Stomach (tissue), 19 donors: ENCODE measurements at regions of chr17 and their contacts with region 1.

Region 1: GRCh38 chr17:44110823-44111633 is 12.4 kb downstream of the HDAC5 start:
- DNase-seq: peak; percentile 98
- H3K4me3 ChIP-seq: peak overlapping the region; percentile 32 to 40 (median 39)
- H3K27ac ChIP-seq: peak overlapping the region; percentile 75 to 93 (median 83)
- H3K4me1 ChIP-seq: peaks cover 55 to 100% (median 81%) of the 10 kb centered on the region in 4 donors
- H3K27me3 ChIP-seq: no peaks in the 10 kb centered on the region
- CTCF ChIP-seq: no peak
- EP300 ChIP-seq: peak; percentile 10
- POLR2A ChIP-seq: no peak

Region 2: DNA sequence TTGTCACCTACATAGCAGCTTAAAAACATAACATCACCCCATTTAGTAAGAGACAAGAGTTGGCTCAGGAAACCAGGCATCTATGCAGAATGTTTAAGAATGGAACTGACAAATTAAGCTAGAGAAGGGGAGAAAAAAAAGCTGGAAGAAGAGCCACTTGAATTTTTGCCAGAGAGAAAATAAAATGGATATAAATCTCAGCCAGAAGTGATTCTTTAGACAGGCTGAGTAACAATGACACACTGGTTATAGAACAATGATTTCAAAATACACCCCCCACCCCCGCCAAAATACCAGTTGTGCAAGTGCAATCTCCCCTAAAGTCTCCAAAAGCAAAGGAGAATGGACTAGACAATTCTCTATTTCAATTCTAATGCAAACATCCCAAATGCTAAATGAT is 67.0 kb before region 1 on chr17:
- intact Hi-C with region 1: loop called (anchors 10 kb)
- DNase-seq: no peak
- H3K4me3 ChIP-seq: no peak overlapping the region
- H3K27ac ChIP-seq: peak overlapping the region in 4 of 5 donors; percentile 46 to 65 (median 52)
- H3K4me1 ChIP-seq: peaks cover 16 to 56% (median 34%) of the 10 kb centered on the region in 4 donors
- H3K27me3 ChIP-seq: no peaks in the 10 kb centered on the region
- CTCF ChIP-seq: no peak
- EP300 ChIP-seq: no peak
- POLR2A ChIP-seq: no peak

Region 3: DNA sequence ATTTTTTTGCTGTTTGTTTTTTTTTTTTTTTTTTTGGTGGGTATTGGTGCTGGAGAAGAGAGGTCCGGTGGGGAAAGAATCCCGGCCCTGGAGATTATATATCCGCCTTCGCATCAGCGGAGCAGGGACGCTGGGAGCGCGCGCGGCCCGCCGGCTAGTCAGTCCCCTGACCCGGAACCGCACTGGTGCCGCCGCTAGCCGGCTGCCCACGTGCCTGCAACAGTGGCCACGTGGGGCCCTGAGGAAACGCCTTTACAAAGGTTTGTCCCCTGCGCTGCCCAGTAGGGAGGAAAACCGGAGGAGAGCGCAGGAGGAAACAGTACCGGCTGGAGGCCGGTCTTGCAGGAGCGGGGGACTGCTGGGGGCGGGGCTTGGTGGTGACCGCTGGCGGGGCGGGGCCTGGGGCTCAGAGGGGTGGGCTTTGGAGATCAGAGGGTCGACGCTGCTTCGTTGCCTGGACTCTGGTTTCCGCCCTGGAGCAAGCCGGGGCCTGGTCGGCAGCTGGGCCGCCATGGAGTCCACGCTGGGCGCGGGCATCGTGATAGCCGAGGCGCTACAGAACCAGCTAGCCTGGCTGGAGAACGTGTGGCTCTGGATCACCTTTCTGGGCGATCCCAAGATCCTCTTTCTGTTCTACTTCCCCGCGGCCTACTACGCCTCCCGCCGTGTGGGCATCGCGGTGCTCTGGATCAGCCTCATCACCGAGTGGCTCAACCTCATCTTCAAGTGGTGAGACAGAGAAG is 40.4 kb before region 1 on chr17 and contains the start of gene G6PC3:
- intact Hi-C with region 1: loop called (anchors 5 kb)
- DNase-seq: peak; percentile 95 to 99
- H3K4me3 ChIP-seq: peak within 1 kb of the TSS; percentile 67 to 79 (median 74)
- H3K27ac ChIP-seq: peak within 1 kb of the TSS; percentile 91 to 95 (median 93)
- H3K4me1 ChIP-seq: peaks cover 22 to 59% (median 40%) of the 10 kb centered on the region in 4 donors
- H3K27me3 ChIP-seq: no peaks in the 10 kb centered on the region
- CTCF ChIP-seq: peak in 1 of 7 experiments; percentile 32
- EP300 ChIP-seq: no peak
- POLR2A ChIP-seq: peak in 1 of 4 donors; percentile 39
- total RNA-seq, gene G6PC3: 10.5 to 132 (median 36.2) TPM

Region 4: DNA sequence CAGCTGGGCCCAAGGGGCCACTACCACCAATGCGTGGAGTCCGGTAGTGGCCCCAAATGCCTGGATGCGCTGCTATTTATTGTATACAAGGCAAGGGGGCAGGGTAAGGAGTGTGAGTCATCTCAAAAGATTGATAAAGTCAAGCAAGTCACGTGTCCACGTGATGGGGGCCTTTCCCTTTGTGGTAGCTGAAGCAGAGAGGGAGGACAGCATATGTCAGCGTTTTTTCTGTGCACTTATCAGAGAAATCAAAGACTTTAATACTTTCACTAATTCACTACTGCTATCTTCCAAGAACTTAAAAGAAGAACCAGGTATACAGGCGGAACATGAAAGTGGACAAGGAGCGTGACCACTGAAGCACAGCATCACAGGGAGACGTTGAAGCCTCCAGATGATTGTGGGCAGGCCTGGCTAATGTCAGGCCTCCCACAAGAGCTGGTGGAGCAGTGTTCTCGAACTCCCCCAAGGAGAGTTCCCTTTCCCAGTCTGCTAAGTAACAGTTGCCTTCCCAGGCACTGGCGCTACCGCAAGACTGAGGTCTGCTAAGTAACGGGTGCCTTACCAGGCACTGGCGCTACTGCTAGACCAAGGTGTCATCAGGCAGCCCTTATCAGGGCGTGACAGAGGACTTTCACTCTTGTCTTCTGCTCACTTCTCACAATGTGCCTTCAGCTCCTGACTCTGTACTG is 48.6 kb after region 1 on chr17:
- intact Hi-C with region 1: no loop called
- DNase-seq: no peak
- H3K4me3 ChIP-seq: no peak overlapping the region
- H3K27ac ChIP-seq: no peak overlapping the region
- H3K4me1 ChIP-seq: no peaks in the 10 kb centered on the region
- H3K27me3 ChIP-seq: no peaks in the 10 kb centered on the region
- CTCF ChIP-seq: no peak
- EP300 ChIP-seq: no peak
- POLR2A ChIP-seq: no peak

Region 5: DNA sequence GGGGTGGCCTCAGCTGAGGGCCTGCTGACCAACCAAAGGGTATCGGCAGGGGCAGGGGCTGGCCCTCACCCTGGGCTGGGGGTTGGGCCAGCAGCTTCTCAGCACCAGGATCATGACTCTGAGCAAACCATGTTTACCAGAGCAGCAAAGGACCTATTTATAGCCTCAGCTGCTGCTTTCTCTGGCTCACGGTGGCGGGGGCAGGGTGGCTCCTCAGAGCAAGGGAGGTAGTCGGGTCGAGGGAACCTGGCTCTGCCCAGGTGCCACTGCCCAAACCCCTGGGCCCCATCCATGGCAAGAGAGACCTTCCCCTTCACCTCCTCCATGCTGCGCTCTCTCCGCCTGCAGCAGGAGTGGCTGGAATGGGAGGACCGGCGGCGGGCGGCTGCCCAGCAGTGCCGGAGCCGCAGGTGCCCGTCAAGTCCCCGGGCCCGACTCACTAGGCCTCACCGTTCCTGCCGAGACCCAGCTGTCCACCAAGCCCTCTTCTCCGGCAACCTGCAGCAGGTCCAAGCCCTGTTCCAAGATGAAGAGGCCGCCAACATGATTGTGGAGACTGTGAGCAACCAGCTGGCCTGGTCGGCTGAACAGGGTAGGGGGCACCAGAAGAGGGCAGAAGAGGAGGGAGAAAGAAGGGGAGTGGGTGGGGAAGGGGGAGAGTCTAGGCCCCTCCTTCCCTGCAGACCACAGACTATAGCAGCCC is 59.6 kb after region 1 on chr17 and contains the start of gene ASB16:
- intact Hi-C with region 1: no loop called
- DNase-seq: peak; percentile 56 to 79
- H3K4me3 ChIP-seq: peak within 1 kb of the TSS; percentile 17 to 42 (median 30)
- H3K27ac ChIP-seq: peak within 1 kb of the TSS; percentile 39 to 76 (median 76)
- H3K4me1 ChIP-seq: peaks cover 0 to 38% (median 26%) of the 10 kb centered on the region in 4 donors
- H3K27me3 ChIP-seq: no peaks in the 10 kb centered on the region
- CTCF ChIP-seq: no peak
- EP300 ChIP-seq: no peak
- POLR2A ChIP-seq: no peak
- total RNA-seq, gene ASB16: 0.73 TPM in 1 of 5 donors, not detected in the others